Panc1 (cell line): ENCODE measurements at regions of chr22 and their contacts with region 1.

Region 1: GRCh38 chr22:40300884-40301672 is 45.2 kb upstream of the ADSL start:
- DNase-seq: no peak
- ATAC-seq: no peak
- H3K4me3 ChIP-seq: no peak overlapping the region
- H3K27ac ChIP-seq: no peak overlapping the region
- H3K4me1 ChIP-seq: no peaks in the 10 kb centered on the region
- H3K27me3 ChIP-seq: no peaks in the 10 kb centered on the region
- CTCF ChIP-seq: no peak

Region 2: GRCh38 chr22:39703928-39704639 is 597.0 kb before region 1 on chr22:
- CTCF ChIA-PET with region 1: interaction called, 11 read pairs
- POLR2A ChIA-PET with region 1: no interaction called
- in situ Hi-C with region 1: no loop called
- intact Hi-C with region 1: no loop called
- DNase-seq: no peak
- ATAC-seq: no peak
- H3K4me3 ChIP-seq: no peak overlapping the region
- H3K27ac ChIP-seq: no peak overlapping the region
- H3K4me1 ChIP-seq: no peaks in the 10 kb centered on the region
- H3K27me3 ChIP-seq: no peaks in the 10 kb centered on the region
- CTCF ChIP-seq: no peak

Region 3: DNA sequence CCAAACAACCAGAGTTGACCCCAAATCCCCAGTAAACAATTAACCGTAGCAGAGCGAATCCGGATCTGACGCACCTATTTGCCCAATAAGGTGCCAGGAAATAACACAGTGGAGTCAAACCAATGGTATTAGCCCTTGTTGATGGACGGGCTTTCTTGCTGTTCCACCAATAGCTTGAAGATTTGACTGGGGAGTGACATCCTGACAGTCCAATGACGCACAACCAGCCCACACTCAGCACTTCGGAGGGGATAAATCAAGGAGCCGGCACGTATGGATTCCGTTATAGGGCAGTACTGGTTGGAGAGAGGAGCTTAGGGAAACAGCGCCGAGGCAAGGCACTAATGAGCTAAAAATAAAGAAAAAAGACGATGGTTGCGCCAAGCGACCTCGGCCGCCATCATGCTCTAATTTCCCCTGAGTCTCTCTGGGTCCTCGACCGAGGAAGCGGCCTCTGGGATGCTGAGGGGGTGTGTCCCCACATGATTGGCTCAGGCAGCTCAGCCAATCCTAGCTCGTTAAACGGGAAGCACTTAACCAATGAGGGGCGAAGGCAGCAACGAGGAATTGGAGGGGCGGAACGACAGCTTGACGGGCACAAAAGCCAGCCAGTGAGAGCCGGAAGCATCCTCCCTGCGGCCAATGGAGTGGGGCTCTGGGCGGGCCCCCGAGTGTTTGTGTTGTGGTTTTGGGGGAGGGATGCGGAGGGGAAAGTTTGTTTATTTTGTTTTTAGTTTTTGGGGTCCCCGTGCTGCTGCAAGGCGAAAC is 256.8 kb before region 1 on chr22:
- CTCF ChIA-PET with region 1: no interaction called
- POLR2A ChIA-PET with region 1: no interaction called
- in situ Hi-C with region 1: no loop called
- intact Hi-C with region 1: no loop called
- DNase-seq: peak; percentile 94
- ATAC-seq: peak; percentile 95
- H3K4me3 ChIP-seq: peak overlapping the region; percentile 64 to 86
- H3K27ac ChIP-seq: peak overlapping the region; percentile 95
- H3K4me1 ChIP-seq: peaks cover 9% of the 10 kb centered on the region
- H3K27me3 ChIP-seq: no peaks in the 10 kb centered on the region
- CTCF ChIP-seq: no peak

Region 4: GRCh38 chr22:40276996-40277823 is 23.9 kb before region 1 on chr22:
- CTCF ChIA-PET with region 1: no interaction called
- POLR2A ChIA-PET with region 1: no interaction called
- in situ Hi-C with region 1: no loop called
- intact Hi-C with region 1: no loop called
- DNase-seq: no peak
- ATAC-seq: no peak
- H3K4me3 ChIP-seq: no peak overlapping the region
- H3K27ac ChIP-seq: no peak overlapping the region
- H3K4me1 ChIP-seq: no peaks in the 10 kb centered on the region
- H3K27me3 ChIP-seq: no peaks in the 10 kb centered on the region
- CTCF ChIP-seq: no peak